ENCODE measurements at regions of chr11 and their contacts with region 1.

Region 1: DNA sequence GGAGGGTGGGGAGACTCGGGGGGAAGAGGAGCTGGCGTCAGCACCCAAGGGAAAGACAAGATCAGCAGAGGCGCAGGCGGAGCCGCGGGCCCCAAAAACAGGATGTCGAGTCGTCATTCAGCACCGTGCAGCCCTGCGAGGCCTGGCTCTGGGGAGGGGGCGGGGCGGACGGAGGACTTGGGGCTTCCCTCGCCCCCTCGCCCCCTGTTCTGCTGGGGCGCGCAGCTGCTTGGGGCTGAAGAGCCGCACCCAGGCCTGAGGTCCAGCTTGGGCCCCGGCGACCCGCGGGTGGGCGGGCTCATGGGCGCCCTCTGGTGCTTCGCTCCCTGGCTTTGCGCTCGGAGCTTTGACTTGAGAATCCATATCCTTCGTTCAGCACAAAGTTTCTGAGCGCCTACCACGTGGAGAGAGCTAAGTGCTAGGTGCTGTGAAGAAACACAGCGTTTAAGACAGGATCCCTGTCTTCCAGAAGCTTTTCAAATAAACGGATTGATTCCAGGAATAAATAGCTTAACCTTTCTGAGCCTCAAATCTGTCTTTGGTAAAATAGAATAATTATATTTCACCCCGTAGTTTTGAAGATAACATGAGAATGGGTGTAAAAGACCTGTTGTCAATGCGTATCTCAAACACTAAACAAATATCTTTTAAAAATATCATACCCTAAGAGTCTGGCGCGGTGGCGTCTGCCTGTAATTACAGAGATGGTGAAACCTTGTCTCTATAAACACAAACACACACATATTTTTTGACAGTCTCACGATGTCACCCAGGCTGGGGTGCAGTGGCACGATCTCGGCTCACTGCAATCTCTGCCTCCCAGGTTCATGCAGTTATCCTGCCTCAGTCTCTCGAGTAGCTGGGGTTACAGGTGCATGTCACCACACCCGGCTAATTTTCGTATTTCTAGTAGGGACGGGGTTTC is 929 bp upstream of the RHOG start:
- DNase-seq: peak; percentile 89 to 97 (median 96)
- H3K4me3 ChIP-seq: peak overlapping the region; percentile 60
- H3K4me3 Mint-ChIP-seq: peak overlapping the region; percentile 85 to 96 (median 91)
- H3K27ac ChIP-seq: peak overlapping the region; percentile 86
- H3K27ac Mint-ChIP-seq: peak overlapping the region; percentile 94 to 99 (median 96)
- H3K4me1 ChIP-seq: peaks cover 32% of the 10 kb centered on the region
- H3K4me1 Mint-ChIP-seq: peaks cover 37 to 48% (median 43%) of the 10 kb centered on the region in 3 donors
- H3K27me3 ChIP-seq: no peaks in the 10 kb centered on the region
- H3K27me3 Mint-ChIP-seq: peaks cover 0 to 4% of the 10 kb centered on the region in 2 donors

Region 2: GRCh38 chr11:3797329-3798095 is 44.2 kb before region 1 on chr11 and contains the start of gene NUP98:
- CTCF ChIA-PET with region 1: interaction called, 27 read pairs
- POLR2A ChIA-PET with region 1: interaction called, 17 read pairs
- DNase-seq: peak; percentile 99 to 100 (median 100)
- H3K4me3 ChIP-seq: peak within 1 kb of the TSS; percentile 97
- H3K4me3 Mint-ChIP-seq: peak within 1 kb of the TSS; percentile 83 to 98 (median 96)
- H3K27ac ChIP-seq: peak within 1 kb of the TSS; percentile 97
- H3K27ac Mint-ChIP-seq: peak within 1 kb of the TSS; percentile 98 to 100 (median 99)
- H3K4me1 ChIP-seq: peaks cover 33% of the 10 kb centered on the region
- H3K4me1 Mint-ChIP-seq: peaks cover 39 to 58% (median 50%) of the 10 kb centered on the region in 3 donors
- H3K27me3 ChIP-seq: no peaks in the 10 kb centered on the region
- H3K27me3 Mint-ChIP-seq: peaks cover 0 to 2% of the 10 kb centered on the region in 2 donors
- total RNA-seq, gene NUP98: 101 to 105 TPM

Region 3: GRCh38 chr11:3807909-3808860 is 33.5 kb before region 1 on chr11 and contains the start of gene PGAP2:
- CTCF ChIA-PET with region 1: interaction called, 23 read pairs
- POLR2A ChIA-PET with region 1: interaction called, 11 read pairs
- DNase-seq: peak; percentile 45 to 71 (median 54)
- H3K4me3 ChIP-seq: peak within 1 kb of the TSS; percentile 94
- H3K4me3 Mint-ChIP-seq: peak within 1 kb of the TSS; percentile 94 to 99 (median 97)
- H3K27ac ChIP-seq: peak within 1 kb of the TSS; percentile 66
- H3K27ac Mint-ChIP-seq: peak within 1 kb of the TSS; percentile 81 to 97 (median 94)
- H3K4me1 ChIP-seq: peaks cover 9% of the 10 kb centered on the region
- H3K4me1 Mint-ChIP-seq: peaks cover 14 to 16% (median 16%) of the 10 kb centered on the region in 3 donors
- H3K27me3 ChIP-seq: no peaks in the 10 kb centered on the region
- H3K27me3 Mint-ChIP-seq: no peaks in the 10 kb centered on the region
- total RNA-seq, gene PGAP2: 38.9 to 40.2 TPM

Region 4: GRCh38 chr11:3824714-3825472 is 16.8 kb before region 1 on chr11:
- CTCF ChIA-PET with region 1: interaction called, 63 read pairs
- POLR2A ChIA-PET with region 1: interaction called, 16 read pairs
- DNase-seq: peak; percentile 70 to 87 (median 74)
- H3K4me3 ChIP-seq: no peak overlapping the region
- H3K4me3 Mint-ChIP-seq: peak overlapping the region in 2 of 7 donors; percentile 35 to 54
- H3K27ac ChIP-seq: no peak overlapping the region
- H3K27ac Mint-ChIP-seq: peak overlapping the region; percentile 63 to 95 (median 90)
- H3K4me1 ChIP-seq: peaks cover 22% of the 10 kb centered on the region
- H3K4me1 Mint-ChIP-seq: peaks cover 25 to 51% (median 37%) of the 10 kb centered on the region in 3 donors
- H3K27me3 ChIP-seq: no peaks in the 10 kb centered on the region
- H3K27me3 Mint-ChIP-seq: no peaks in the 10 kb centered on the region

Region 5: DNA sequence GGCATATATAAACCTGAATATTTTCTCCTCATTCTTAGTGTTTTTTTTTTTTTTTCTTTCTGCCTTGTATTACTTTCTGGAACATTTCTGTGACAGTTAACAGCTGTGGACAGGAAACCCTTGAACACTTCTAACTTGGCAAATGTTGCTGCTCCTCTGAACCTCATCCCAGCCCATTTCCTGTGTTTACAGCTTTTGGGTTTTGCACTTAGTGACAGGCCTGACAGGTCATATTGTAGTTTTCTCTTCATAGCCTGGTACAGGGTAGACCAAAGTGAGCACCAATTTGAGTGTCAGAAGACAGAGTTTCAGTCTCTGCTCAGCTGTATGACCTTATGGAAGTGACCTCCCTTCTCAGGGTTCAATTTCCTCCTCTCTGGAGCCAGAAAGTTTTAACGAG is 105.4 kb after region 1 on chr11:
- CTCF ChIA-PET with region 1: interaction called, 12 read pairs
- POLR2A ChIA-PET with region 1: interaction called, 8 read pairs
- DNase-seq: peak; percentile 16 to 81 (median 70)
- H3K4me3 ChIP-seq: peak overlapping the region; percentile 54
- H3K4me3 Mint-ChIP-seq: peak overlapping the region; percentile 22 to 81 (median 77)
- H3K27ac ChIP-seq: peak overlapping the region; percentile 53
- H3K27ac Mint-ChIP-seq: peak overlapping the region; percentile 79 to 99 (median 92)
- H3K4me1 ChIP-seq: peaks cover 98% of the 10 kb centered on the region
- H3K4me1 Mint-ChIP-seq: peaks cover 94 to 97% (median 97%) of the 10 kb centered on the region in 3 donors
- H3K27me3 ChIP-seq: no peaks in the 10 kb centered on the region
- H3K27me3 Mint-ChIP-seq: no peaks in the 10 kb centered on the region

Region 6: GRCh38 chr11:3984896-3985295 is 143.2 kb after region 1 on chr11:
- CTCF ChIA-PET with region 1: interaction called, 11 read pairs
- POLR2A ChIA-PET with region 1: no interaction called
- DNase-seq: peak in 1 of 5 donors; percentile 50
- H3K4me3 ChIP-seq: no peak overlapping the region
- H3K4me3 Mint-ChIP-seq: peak overlapping the region in 1 of 7 donors; percentile 7
- H3K27ac ChIP-seq: no peak overlapping the region
- H3K27ac Mint-ChIP-seq: peak overlapping the region in 5 of 8 donors; percentile 3 to 86 (median 64)
- H3K4me1 ChIP-seq: peaks cover 64% of the 10 kb centered on the region
- H3K4me1 Mint-ChIP-seq: peaks cover 71 to 97% (median 95%) of the 10 kb centered on the region in 3 donors
- H3K27me3 ChIP-seq: no peaks in the 10 kb centered on the region
- H3K27me3 Mint-ChIP-seq: no peaks in the 10 kb centered on the region

Measured in CD8-positive, alpha-beta memory T cell (primary cell).